Stomach (tissue), 19 donors: ENCODE measurements at regions of chr18 and their contacts with region 1.

Region 1: GRCh38 chr18:47772374-47773248 is 157.8 kb downstream of the SMAD2 start:
- DNase-seq: peak; percentile 62 to 78
- H3K4me3 ChIP-seq: no peak overlapping the region
- H3K27ac ChIP-seq: no peak overlapping the region
- H3K4me1 ChIP-seq: no peaks in the 10 kb centered on the region
- H3K27me3 ChIP-seq: no peaks in the 10 kb centered on the region
- CTCF ChIP-seq: peak in 5 of 7 experiments; percentile 63 to 86 (median 74)
- EP300 ChIP-seq: no peak
- POLR2A ChIP-seq: no peak

Region 2: DNA sequence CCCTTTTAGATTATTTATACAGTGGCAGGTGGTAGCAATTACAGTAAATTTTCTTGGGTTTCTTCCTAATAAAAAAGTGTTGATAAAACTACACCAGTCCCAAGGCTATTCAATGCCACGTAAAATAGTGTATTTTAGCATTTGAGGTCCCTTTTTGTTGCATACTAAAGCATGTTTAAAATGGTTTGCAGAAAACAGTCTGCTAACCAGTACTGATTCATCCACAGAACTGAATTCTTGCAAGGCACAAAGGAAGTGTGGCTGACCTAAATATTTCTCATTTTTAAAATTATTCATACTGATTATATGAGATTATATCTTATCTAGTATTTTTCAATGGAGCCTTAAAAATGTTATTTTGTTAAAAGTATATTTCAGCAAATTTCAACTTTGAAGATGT is 59.7 kb after region 1 on chr18:
- intact Hi-C with region 1: loop called (anchors 10 kb)
- DNase-seq: no peak
- H3K4me3 ChIP-seq: no peak overlapping the region
- H3K27ac ChIP-seq: no peak overlapping the region
- H3K4me1 ChIP-seq: no peaks in the 10 kb centered on the region
- H3K27me3 ChIP-seq: no peaks in the 10 kb centered on the region
- CTCF ChIP-seq: no peak
- EP300 ChIP-seq: no peak
- POLR2A ChIP-seq: no peak

Region 3: GRCh38 chr18:48017635-48018034 is 245.0 kb after region 1 on chr18:
- intact Hi-C with region 1: loop called (anchors 5 kb)
- DNase-seq: peak in 1 of 2 donors; percentile 13
- H3K4me3 ChIP-seq: no peak overlapping the region
- H3K27ac ChIP-seq: no peak overlapping the region
- H3K4me1 ChIP-seq: peaks cover 0 to 4% (median 1%) of the 10 kb centered on the region in 4 donors
- H3K27me3 ChIP-seq: peaks cover 0 to 34% (median 5%) of the 10 kb centered on the region in 3 donors
- CTCF ChIP-seq: no peak
- EP300 ChIP-seq: no peak
- POLR2A ChIP-seq: no peak